PC-9 (cell line): ENCODE measurements at regions of chr2 and their contacts with region 1.

Region 1: DNA sequence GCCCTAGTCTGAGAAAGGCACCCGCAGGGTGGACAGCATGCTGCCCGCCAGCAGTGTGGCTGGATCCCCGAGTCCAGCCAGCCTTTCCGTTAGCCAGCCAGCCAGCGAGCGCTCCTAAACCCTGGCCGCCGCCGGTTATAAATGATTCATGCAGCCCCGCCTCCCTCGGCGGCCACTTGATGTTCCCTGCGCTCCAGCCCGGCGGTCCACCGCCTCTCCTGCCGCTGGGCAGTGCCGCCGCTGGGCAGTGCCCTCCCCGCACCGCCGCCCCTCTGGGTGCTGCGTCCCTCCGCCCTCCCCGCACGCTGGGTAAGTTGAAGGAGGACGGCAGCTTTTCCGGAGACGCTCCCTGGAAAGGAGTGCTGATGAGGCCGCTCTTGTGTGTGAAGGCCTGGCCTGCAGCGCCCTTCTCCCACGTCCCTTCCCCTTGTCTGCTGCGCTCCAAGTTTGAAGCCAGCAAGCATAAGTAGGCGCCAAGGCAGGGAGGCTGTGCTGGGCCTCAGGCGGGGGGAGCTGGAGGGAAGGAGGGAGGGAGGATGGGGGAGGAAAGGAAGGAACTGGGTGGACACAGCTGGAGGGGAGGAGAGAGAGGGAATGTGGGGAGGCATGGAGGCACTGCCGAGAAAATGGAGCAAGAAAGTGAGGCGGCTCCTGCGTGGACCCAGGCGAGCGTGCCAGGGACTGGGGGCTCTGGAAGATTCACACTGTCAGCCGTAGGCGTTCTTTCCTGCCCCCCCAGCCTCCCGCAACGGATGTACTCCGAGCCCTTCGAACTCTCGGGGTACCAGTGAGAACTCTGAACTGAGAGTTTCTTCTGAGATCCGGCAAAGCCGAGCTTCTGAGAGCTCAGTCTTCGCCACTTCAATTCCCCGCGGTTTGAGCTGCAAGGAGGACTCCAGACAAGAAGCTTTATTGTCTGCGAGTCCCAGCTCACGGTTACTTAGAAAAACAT is 131.9 kb downstream of the GLI2 start:
- DNase-seq: peak in 1 of 2 experiments; percentile 74
- H3K4me3 ChIP-seq: no peak overlapping the region
- H3K27ac ChIP-seq: no peak overlapping the region
- H3K4me1 ChIP-seq: peaks cover 9% of the 10 kb centered on the region; the same call in 1 of the 2 replicates
- H3K27me3 ChIP-seq: peaks cover 52% of the 10 kb centered on the region
- CTCF ChIP-seq: no peak

Region 2: GRCh38 chr2:120722568-120723421 is 144.8 kb before region 1 on chr2:
- CTCF ChIA-PET with region 1: no interaction called
- POLR2A ChIA-PET with region 1: no interaction called
- intact Hi-C with region 1: no loop called
- DNase-seq: no peak
- H3K4me3 ChIP-seq: no peak overlapping the region
- H3K27ac ChIP-seq: no peak overlapping the region
- H3K4me1 ChIP-seq: no peaks in the 10 kb centered on the region
- H3K27me3 ChIP-seq: peaks cover 13% of the 10 kb centered on the region; the same call in 1 of the 2 replicates
- CTCF ChIP-seq: no peak

Region 3: DNA sequence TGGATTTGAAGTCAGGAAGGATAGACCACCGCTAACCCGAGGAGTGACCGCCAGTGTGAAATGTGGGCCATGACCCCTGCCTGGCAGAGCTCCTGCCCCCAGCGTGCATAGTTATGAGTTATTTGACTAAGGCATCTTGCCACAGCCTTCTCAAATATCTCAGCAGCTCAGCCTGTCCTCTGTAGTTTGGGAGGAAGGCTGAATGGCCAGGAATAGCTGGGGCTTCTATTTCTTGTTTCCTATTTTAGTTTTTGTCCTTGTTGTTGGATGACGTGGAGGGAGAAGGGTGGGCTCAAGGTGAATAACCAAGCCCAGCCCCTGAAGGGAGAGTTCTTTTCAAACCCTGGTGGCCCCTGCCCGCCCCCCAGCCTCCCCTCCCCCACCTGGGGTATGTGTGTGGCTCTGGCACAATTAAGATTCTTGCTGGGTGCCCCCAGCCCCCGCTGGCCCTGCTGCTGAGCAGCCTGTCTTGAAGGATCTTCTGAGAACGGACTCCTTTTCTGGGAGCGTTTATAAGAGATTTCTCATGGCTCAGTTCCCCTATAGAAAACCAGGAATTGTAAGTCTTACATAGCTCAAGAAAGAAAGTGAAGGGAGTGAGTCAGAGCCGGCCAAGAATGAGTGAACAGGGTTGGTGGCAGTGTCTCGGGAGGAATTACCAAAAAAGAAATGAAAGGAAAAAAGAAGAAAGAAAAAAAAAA is 25.6 kb after region 1 on chr2:
- CTCF ChIA-PET with region 1: no interaction called
- POLR2A ChIA-PET with region 1: no interaction called
- intact Hi-C with region 1: no loop called
- DNase-seq: no peak
- H3K4me3 ChIP-seq: no peak overlapping the region
- H3K27ac ChIP-seq: no peak overlapping the region
- H3K4me1 ChIP-seq: no peaks in the 10 kb centered on the region
- H3K27me3 ChIP-seq: peaks cover 21% of the 10 kb centered on the region
- CTCF ChIP-seq: no peak

Region 4: DNA sequence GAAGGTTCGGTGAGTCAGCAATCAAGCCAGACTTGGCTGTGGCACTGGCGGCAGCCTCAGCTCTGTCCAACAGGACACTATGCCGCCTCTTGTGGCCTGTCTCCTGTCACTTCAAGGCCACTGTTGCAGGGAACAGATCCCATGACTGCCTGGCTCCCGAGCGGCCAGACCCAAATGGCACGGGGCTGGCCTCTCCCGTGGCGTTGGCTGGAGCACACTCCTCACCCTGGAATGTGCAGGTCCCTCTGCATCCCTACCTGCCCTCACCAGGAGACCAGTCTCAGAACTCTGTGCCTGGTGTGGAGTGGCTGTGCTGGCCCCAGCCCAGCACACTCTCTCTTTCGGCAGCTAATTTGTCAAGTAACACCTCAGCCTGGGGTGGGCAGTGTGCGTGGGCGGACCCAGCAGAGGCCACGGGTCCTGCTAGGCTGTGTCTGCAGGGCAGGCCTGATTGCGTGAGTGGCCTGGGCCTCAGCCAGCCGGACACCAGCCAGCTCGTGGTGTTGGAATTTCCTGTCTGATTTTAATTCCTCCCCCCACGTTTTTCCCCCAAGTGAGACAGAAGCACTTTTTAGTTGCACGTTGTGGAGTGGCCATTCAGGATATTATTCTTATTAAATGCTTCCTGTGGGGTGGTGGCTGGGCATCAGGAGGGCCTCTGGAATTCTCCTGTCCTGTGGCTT is 47.4 kb after region 1 on chr2:
- CTCF ChIA-PET with region 1: no interaction called
- POLR2A ChIA-PET with region 1: no interaction called
- intact Hi-C with region 1: loop called (anchors 2 kb)
- DNase-seq: peak; percentile 46 to 87
- H3K4me3 ChIP-seq: no peak overlapping the region
- H3K27ac ChIP-seq: no peak overlapping the region
- H3K4me1 ChIP-seq: peaks cover 21% of the 10 kb centered on the region
- H3K27me3 ChIP-seq: no peaks in the 10 kb centered on the region
- CTCF ChIP-seq: no peak

Region 5: DNA sequence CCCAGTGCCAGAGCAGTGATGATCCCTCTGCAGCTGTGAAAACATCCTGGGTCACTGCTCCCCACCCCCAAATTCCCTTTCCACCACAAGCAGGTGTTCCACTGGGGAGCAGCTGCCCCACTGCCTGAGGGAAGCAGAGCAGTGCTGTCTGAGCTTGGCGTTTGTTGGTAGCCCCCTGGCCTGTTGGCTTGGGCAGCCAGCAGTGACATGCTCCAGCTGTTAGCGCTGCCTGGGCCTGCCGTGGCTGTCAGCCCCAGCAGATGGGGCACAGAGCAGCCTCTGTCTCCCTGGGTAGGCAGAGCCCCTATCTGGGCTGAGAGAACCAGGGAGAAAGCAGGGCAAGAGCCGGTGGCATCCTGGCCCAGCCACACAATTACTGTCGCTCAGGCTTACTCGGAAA is 115.8 kb after region 1 on chr2:
- CTCF ChIA-PET with region 1: no interaction called
- POLR2A ChIA-PET with region 1: no interaction called
- intact Hi-C with region 1: no loop called
- DNase-seq: no peak
- H3K4me3 ChIP-seq: no peak overlapping the region
- H3K27ac ChIP-seq: no peak overlapping the region
- H3K4me1 ChIP-seq: no peaks in the 10 kb centered on the region; the same call in 1 of the 2 replicates
- H3K27me3 ChIP-seq: peaks cover 26% of the 10 kb centered on the region; the same call in 1 of the 2 replicates
- CTCF ChIP-seq: no peak